RWPE1 (cell line): ENCODE measurements at regions of chr17 and their contacts with region 1.

Region 1: DNA sequence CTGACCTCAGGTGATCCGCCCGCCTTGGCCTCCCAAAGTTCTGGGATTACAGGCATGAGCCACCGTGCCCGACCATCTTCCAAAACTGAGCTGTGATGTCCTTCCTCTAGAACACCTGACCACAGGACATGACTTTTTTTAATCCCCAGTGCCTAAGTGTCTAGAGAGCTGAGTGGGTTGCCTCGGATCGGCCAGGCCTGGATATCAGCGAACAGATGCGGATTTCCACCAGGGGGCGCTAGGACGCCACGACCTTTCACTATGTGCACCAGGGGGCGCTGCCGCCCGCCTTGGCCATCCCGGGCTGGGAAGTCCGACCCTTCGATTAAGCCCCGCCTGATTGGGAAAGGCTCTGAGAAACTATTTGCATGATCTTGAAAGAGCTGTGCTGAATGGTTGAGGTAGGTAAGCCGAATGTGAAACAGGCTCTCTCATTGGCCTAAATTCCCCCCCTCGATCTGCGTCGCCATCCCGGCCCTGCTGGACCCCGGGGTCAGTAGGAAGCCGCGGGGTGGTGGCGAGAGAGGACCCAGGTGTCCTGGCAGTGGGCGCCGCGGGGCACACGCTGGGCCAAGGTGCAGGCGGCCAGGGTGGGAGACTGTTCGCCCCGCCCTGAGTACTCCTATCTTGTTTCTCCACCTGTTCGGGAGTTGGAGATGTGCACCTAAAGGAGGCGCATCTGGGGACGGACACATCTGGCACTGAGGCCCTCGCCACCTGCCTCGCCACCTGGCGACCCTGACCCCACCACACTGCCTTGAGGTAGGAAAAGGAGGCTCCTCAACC is at the start of gene ACBD4:
- DNase-seq: peak; percentile 98
- H3K27ac ChIP-seq: peak within 1 kb of the TSS; percentile 59
- CTCF ChIP-seq: peak; percentile 99

Region 2: DNA sequence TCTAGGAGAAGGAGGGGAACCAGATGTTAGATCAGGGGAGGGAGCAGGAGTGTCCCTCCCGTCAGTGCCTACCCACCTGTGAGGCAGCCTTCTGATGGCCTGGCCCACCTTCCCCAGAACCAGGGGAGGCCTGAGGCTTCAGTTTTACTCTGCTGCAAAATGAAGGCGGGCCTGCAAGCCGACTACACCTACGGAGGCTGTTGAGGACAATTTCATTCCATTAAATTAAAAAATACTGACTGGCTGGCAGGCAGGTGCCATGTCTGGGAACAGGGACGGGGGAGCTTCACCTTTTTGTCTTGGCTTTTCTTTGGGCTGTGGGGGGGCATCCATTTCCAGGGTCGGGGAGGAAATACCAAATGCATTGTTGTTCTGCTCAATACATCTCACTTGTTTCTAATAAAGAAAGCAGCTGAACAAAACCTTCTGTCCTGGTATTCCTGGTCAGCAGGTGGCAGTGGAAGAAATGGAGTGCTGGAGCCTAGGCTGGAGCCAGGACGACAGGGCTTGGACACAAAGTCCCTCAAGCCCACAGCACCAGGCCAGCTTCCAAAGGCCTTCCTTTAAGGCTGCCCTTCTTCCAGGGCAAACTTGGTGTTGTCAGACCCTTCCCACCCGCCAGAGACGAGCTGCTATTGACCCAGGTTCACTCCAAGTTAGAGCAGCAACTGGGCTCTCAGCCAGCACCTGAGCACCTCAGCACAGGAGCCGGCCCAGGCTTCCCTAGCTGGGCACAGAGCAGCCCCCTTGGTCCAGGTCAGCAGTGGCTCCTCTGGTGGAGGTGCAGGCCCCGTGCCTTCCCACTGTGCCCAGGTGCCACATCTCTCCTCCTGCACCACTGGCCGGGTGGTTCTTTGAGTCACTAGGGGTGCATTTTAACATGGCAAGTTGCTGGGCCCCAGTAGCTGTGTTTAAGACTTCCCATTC is 26.5 kb before region 1 on chr17:
- CTCF ChIA-PET with region 1: interaction called, 10 read pairs
- POLR2A ChIA-PET with region 1: interaction called, 4 read pairs
- DNase-seq: no peak
- H3K27ac ChIP-seq: peak overlapping the region; percentile 81
- CTCF ChIP-seq: 0 out of 2 replicates have a peak, but pooled peaks have one; percentile 9

Region 3: GRCh38 chr17:45148183-45149036 is 13.0 kb after region 1 on chr17 and contains the start of gene HEXIM1:
- CTCF ChIA-PET with region 1: interaction called, 46 read pairs
- POLR2A ChIA-PET with region 1: interaction called, 15 read pairs
- DNase-seq: peak; percentile 98
- H3K27ac ChIP-seq: peak within 1 kb of the TSS; percentile 95
- CTCF ChIP-seq: no peak

Region 4: DNA sequence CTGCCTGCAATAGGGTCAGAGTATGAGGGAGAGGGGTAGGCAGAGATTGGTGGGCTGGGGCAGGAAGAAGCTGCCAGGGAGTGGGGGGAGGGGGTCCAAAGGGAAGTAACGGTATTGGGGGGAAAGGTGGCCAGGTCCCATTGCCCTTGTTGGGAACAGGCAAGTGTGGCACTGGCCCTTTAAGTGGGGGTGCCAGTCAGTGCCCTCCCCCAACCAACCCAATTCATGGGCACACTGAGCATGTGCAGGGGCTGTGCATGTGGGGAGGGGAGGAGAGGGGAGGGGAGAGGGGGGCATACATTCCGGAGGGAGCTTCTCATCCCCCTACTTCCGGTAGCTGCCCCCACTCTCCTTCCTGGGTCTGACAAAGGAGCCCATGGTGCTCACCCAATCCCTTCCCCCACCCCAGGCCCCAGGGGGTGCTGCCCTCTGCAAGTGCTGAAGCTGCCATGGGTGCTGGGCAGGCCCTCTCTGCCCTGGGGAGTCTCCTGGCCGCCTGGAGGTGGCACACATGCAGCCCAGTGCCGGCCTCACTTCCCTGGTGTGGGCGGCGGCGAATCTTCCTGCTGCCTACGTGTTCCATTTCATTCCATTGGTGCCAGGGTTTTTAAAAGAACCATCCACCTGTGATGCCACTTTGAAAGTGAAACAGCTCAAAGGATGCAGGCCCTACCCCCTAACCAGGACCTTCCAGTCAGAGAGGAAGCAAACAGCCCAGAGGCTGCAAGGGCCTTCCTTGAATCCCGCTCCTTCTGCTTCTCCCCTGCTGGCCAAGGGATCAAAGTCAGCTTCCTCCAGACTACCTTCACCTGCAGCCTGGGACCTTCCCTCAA is 37.3 kb after region 1 on chr17:
- CTCF ChIA-PET with region 1: interaction called, 8 read pairs
- POLR2A ChIA-PET with region 1: interaction called, 10 read pairs
- DNase-seq: peak; percentile 89
- H3K27ac ChIP-seq: peak overlapping the region; percentile 100
- CTCF ChIP-seq: no peak

Region 5: DNA sequence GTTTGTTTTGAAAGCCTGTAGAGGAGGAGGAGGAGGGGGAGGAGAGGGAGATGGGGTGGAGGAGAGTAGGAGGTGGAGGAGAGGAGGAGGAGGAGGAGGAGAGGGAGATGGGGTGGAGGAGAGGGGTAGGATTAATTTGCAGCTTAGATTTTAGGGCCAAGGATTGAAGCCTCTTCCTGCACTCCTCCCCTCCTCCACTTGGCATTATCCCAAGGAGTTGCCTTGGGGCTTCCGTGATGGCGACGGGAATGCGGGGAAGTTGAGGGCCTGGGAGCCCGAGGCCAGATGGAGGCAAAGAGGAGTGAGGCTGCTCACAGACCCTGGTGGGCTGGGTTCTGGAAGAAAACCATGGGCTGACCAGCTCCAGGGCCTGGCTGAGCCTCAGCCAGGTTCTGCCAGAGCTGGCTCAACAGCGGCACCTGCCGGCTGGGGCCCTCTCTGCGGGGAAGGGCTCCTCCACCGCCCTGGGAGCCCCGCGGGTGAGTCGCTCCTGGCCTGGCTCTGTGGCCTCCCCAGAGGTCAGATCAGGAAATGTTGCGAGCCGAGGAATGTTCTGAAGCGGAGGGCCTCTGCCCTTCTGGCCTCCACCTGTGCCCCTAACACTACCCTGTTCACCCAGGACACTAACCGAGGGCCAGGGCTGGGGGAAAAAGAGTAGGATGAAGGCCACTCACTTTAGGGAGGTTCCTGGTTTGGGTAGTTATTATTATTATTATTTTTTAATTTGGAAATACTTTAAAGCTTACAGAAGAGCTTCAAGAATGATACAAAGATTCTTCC is 62.4 kb after region 1 on chr17:
- CTCF ChIA-PET with region 1: interaction called, 65 read pairs
- POLR2A ChIA-PET with region 1: interaction called, 7 read pairs
- DNase-seq: peak; percentile 86
- H3K27ac ChIP-seq: peak overlapping the region; percentile 69
- CTCF ChIP-seq: peak; percentile 99

Region 6: GRCh38 chr17:45218895-45219661 is 83.7 kb after region 1 on chr17:
- CTCF ChIA-PET with region 1: interaction called, 15 read pairs
- POLR2A ChIA-PET with region 1: no interaction called
- DNase-seq: peak; percentile 70
- H3K27ac ChIP-seq: peak overlapping the region; percentile 12; the same call in 1 of the 2 replicates
- CTCF ChIP-seq: peak; percentile 89

Region 7: DNA sequence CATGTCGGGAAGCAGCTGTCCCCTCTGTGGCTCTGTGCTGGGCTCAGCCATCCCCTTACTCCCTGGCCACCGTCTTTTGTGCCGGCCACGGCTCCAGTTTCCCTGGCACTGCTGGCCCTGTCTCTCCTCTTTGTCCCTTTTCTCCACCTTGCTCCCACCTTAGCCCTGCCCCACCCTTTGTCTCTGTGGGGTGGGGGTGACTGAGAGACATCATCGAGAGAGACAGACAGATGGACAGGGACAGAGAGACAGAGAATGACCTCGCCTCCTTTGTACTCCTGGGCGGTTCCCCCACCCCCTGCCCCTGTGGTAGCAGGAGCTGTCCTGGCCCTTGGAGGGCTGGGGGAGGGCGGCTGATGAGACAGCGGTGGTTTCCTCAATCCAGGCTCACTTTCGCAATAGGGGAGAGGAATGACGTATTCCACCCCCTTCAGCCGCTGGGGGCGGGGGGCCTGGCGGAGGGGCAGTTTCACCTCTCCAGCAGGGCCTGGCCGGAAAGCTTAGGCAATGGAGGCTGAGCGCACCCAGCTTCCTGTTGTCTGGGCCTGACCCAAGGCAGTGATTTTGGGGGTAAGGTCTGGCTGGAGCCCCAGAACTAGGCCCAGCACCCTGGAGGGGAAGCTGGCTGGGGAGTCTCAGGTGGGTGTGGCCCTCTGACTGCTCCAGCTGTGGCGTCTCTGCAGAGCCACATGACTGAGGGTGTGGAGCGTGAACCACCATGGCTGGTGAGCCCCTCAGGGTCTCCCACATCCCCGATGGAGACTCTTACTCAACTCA is 93.6 kb after region 1 on chr17:
- CTCF ChIA-PET with region 1: interaction called, 10 read pairs
- POLR2A ChIA-PET with region 1: no interaction called
- DNase-seq: peak; percentile 94
- H3K27ac ChIP-seq: peak overlapping the region; percentile 94
- CTCF ChIP-seq: no peak